ENCODE measurements at regions of chr1 and their contacts with region 1.

Region 1: GRCh38 chr1:42335050-42335808 is at the start of gene FOXJ3:
- DNase-seq: peak; percentile 95
- ATAC-seq: peak; percentile 94
- total RNA-seq, gene FOXJ3: 37.9 TPM

Region 2: DNA sequence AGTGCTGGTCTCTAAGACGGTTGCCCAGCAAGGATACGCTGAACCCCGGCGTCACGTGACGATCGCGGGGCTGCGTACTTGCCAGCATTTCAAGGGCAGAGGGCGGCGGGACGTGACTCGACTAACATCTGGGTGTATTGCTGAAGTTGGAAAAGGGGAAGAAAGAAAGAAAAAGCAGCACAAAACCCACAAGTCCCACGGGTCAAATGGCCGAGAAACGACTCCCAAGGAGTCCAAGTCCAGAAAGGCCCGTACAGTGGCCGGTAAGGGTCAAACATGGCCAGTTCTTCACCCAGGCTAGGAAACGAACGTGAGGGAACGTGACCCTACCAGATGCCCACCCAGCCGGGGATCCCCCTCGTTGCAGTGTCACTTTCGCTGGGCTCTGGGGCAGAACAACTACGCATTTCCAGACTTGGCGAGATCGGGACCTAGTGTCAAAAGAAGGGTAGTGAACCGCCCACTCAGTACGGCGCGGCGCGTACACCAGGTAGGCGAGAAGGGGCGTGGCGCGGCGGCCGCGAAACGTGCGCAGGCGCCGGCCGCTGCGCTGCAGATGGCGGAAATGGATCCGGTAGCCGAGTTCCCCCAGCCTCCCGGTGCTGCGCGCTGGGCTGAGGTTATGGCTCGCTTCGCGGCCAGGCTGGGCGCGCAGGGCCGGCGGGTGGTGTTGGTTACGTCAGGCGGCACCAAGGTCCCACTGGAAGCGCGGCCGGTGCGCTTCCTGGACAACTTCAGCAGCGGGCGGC is 121.0 kb after region 1 on chr1 and contains the starts of genes PPCS and ZMYND12:
- intact Hi-C with region 1: loop called (anchors 5 kb)
- DNase-seq: peak; percentile 95
- ATAC-seq: peak; percentile 97
- total RNA-seq, gene PPCS: 36.8 TPM
- total RNA-seq, gene ZMYND12: 1.4 TPM

Measured in Right ventricle myocardium inferior (tissue), 1 donor.